Astrocyte of the cerebellum (primary cell): ENCODE measurements at regions of chr3 and their contacts with region 1.

Region 1: GRCh38 chr3:94413724-94414111 is 350.9 kb downstream of the NSUN3 start:
- DNase-seq: peak; percentile 68
- H3K4me3 ChIP-seq: no peak overlapping the region
- CTCF ChIP-seq: no peak

Region 2: DNA sequence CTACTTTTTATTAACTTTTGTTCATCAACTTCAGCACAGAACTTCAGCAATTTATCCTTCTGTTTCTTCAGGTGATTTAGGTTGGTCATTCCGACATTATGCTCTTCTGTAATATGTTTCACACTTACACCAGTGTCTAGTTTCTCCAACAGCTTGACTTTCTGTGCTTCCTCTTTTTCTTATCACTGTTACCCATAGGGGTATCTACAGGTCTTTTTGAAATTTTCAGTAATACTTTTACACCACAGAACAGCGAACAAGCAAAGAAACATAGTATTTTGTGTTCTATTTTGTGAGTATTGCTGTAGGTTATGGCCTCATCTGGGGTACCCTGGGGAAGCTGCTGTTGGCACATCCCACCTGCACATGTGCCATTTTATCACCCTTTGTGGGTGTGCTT is 90.1 kb before region 1 on chr3:
- in situ Hi-C with region 1: no loop called
- DNase-seq: no peak
- H3K4me3 ChIP-seq: no peak overlapping the region
- CTCF ChIP-seq: no peak

Region 3: DNA sequence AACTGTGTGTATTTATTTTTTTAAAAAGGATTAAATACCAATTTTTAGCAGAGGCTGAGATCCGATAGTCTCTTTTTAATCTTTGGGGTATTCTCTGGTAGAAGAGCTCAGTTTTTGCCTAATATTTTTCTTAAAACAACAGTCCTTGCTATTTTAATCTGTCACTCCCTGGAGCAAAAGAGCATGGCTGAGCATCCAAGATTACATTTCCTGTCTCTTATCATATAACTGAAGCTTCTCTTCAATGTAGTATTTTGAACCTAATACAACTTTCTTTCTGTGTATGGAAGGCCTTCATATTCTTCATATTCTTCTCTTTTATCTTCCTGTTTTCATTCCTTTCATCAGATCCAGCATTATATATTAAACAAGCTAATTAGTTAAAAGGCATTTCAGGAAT is 57.1 kb before region 1 on chr3:
- in situ Hi-C with region 1: loop called (anchors 10 kb)
- DNase-seq: no peak
- H3K4me3 ChIP-seq: no peak overlapping the region
- CTCF ChIP-seq: no peak

Region 4: GRCh38 chr3:94472511-94472910 is 58.8 kb after region 1 on chr3:
- in situ Hi-C with region 1: no loop called
- DNase-seq: no peak
- H3K4me3 ChIP-seq: no peak overlapping the region
- CTCF ChIP-seq: no peak